Left lung (tissue), 14 donors: ENCODE measurements at regions of chr12 and their contacts with region 1.

Region 1: GRCh38 chr12:32679091-32679919 is at the start of gene DNM1L:
- DNase-seq: peak; percentile 93 to 99 (median 96)
- ATAC-seq: peak; percentile 99
- H3K4me3 ChIP-seq: peak within 1 kb of the TSS; percentile 89 to 97
- H3K27ac ChIP-seq: peak within 1 kb of the TSS; percentile 91 to 97
- H3K4me1 ChIP-seq: peaks cover 9 to 29% of the 10 kb centered on the region in 2 donors
- H3K27me3 ChIP-seq: no peaks in the 10 kb centered on the region
- CTCF ChIP-seq: peak in 1 of 2 donors; percentile 25
- polyA plus RNA-seq, gene DNM1L: 98.5 to 128 (median 121) TPM

Region 2: DNA sequence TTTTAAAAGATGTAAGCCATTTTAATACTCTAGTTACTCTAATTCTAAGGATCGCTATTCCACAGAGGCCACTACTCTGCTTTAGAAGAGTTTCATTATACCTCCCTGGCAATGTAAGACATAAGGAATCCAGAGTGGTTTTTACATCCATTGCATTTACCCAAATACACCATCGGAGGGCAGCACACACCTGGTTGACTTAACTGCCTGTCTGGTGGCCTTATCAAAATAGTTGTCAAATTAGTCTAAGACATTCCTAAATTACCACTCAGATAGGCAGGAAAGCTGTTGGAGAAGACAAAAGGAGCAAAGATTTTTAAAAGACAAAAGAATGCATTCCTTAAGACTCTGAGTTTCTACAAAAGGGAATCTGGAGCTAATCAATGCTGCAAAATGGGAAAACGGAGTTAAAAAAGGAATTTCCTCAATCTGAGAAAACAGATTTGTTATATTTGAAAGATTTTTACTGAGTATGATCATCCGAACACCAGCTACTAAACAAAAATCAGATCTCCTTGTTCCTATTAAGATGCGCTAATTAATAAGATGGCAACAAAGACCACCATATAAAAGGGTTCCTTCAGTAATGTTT is 313.7 kb before region 1 on chr12:
- intact Hi-C with region 1: loop called in 1 of 2 experiments (anchors 10 kb)
- DNase-seq: peak in 2 of 4 donors; percentile 36 to 69
- ATAC-seq: peak; percentile 97
- H3K4me3 ChIP-seq: no peak overlapping the region
- H3K27ac ChIP-seq: no peak overlapping the region
- H3K4me1 ChIP-seq: no peaks in the 10 kb centered on the region
- H3K27me3 ChIP-seq: no peaks in the 10 kb centered on the region
- CTCF ChIP-seq: peak; percentile 67 to 74

Region 3: GRCh38 chr12:32516230-32516629 is 163.1 kb before region 1 on chr12:
- intact Hi-C with region 1: no loop called
- DNase-seq: no peak
- ATAC-seq: no peak
- H3K4me3 ChIP-seq: no peak overlapping the region
- H3K27ac ChIP-seq: peak overlapping the region in 1 of 2 donors; percentile 45
- H3K4me1 ChIP-seq: peaks cover 7 to 29% of the 10 kb centered on the region in 2 donors
- H3K27me3 ChIP-seq: no peaks in the 10 kb centered on the region
- CTCF ChIP-seq: no peak

Region 4: DNA sequence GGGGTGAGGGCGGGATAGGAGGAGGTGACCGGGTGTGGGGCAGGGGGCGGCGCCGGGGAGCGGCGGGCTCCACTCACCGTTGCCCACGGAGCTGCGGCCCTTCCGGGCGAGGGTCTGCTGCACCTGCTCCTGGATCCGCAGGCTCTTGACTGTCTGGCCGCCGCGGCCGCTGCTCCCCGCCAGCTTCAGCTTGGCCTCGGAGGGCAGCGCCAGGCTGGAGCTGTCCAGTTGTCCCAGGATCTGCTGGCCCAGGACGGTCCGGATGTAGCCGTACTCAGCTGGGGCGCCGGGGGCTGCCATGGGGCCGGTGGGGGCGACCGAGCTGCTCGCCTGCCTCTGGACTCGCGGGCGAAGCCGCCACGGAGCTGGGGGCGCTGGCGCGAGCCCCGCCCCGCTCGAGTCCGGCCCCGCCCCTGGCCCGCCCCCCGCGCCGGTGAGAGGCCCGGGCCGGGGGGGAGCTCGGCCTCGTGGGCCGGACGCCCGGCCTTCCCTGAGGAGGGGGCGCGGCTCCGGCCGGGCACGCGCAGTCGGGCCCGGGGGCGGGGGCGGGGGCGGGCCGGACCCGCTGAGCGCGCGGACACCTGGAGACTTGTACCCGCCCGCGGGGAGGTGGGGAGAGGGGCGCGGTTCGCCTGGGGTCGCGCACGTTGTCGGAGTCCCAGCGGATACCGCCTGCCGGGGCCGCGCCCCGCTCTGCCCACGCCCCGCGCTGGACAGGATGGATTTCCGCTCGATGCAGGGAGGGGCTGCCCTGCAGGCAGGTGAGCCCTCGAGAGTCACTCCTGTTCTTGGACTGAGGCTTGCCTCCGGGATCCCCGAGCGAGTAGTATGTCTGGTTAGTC is 217.3 kb after region 1 on chr12 and contains the start of gene PKP2:
- intact Hi-C with region 1: no loop called
- DNase-seq: peak; percentile 34 to 91 (median 70)
- ATAC-seq: peak; percentile 88
- H3K4me3 ChIP-seq: peak within 1 kb of the TSS; percentile 42 to 53
- H3K27ac ChIP-seq: peak within 1 kb of the TSS in 1 of 2 donors; percentile 33
- H3K4me1 ChIP-seq: peaks cover 0 to 40% of the 10 kb centered on the region in 2 donors
- H3K27me3 ChIP-seq: peaks cover 30 to 64% of the 10 kb centered on the region in 2 donors
- CTCF ChIP-seq: no peak
- polyA plus RNA-seq, gene PKP2: 3.6 to 6.7 (median 5.3) TPM

Region 5: GRCh38 chr12:32939801-32940200 is 260.5 kb after region 1 on chr12:
- intact Hi-C with region 1: no loop called
- DNase-seq: no peak
- ATAC-seq: no peak
- H3K4me3 ChIP-seq: no peak overlapping the region
- H3K27ac ChIP-seq: no peak overlapping the region
- H3K4me1 ChIP-seq: no peaks in the 10 kb centered on the region
- H3K27me3 ChIP-seq: no peaks in the 10 kb centered on the region
- CTCF ChIP-seq: no peak